Heart right ventricle (tissue), 16 donors: ENCODE measurements at regions of chr9 and their contacts with region 1.

Region 1: GRCh38 chr9:32180597-32180996 is 203.8 kb upstream of the ACO1 start:
- DNase-seq: no peak
- ATAC-seq: no peak
- H3K4me3 ChIP-seq: no peak overlapping the region
- H3K27ac ChIP-seq: no peak overlapping the region
- H3K4me1 ChIP-seq: no peaks in the 10 kb centered on the region
- H3K27me3 ChIP-seq: no peaks in the 10 kb centered on the region
- CTCF ChIP-seq: no peak

Region 2: GRCh38 chr9:31950756-31951155 is 229.8 kb before region 1 on chr9:
- intact Hi-C with region 1: no loop called
- DNase-seq: no peak
- ATAC-seq: no peak
- H3K4me3 ChIP-seq: no peak overlapping the region
- H3K27ac ChIP-seq: no peak overlapping the region
- H3K4me1 ChIP-seq: no peaks in the 10 kb centered on the region
- H3K27me3 ChIP-seq: no peaks in the 10 kb centered on the region
- CTCF ChIP-seq: no peak

Region 3: DNA sequence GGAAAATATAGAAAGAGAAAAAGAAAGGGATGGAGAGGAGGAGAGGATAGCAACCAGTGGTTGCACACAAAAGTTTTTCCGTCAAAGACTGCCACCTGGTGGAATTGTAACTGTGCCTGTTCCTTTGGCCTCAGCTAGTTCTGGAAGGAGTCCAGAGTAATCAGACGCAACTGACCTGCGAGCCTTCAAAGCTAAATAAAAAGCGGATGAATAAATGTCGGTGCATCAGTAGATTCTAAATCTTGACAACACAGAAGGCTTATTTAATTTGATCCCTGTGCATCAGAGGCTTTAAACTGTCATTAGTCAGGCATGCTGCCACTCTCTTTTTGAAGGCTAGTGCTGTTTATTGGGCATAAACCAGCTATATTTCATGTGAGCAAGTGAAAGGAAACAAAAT is 70.9 kb after region 1 on chr9:
- intact Hi-C with region 1: loop called in 1 of 10 experiments (anchors 10 kb)
- DNase-seq: peak in 1 of 2 donors; percentile 34
- ATAC-seq: peak in 3 of 8 donors; percentile 43 to 56 (median 52)
- H3K4me3 ChIP-seq: no peak overlapping the region
- H3K27ac ChIP-seq: no peak overlapping the region
- H3K4me1 ChIP-seq: no peaks in the 10 kb centered on the region
- H3K27me3 ChIP-seq: no peaks in the 10 kb centered on the region
- CTCF ChIP-seq: peak in 8 of 9 donors; percentile 16 to 74 (median 62)